Pancreas (tissue), 10 donors: ENCODE measurements at regions of chr6 and their contacts with region 1.

Region 1: DNA sequence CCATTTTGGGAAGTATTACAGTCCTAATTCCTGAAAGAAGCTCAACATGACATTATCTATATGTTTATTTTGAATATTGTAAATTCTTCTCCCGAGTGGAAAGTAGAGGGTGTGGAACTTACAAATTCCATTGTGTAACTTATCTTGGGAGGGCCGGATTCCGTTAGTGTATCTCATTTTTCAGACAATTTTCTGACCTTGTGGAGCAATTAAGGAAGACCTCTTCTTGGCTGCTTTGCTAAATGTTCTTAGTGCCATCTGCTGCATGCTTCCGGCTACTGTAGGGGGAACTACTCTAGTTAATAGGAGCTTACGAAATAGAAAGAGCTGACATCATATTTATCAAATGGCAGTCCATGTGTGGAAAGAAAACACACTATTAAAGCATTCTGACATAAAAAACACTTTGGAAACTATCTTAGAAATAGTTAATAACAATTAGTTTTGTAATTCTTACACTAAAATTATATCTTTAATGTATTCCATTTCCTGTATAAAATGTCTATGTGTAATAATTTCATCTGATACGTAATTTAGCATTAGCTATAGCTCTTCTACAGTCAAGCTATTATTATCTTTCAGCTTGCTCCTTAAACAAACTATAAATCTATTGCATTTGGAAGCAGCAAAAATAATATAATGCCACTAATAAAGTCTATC is 41.5 kb upstream of the KCNQ5 start:
- DNase-seq: peak in 3 of 6 donors; percentile 33 to 50 (median 46)
- ATAC-seq: peak; percentile 72 to 99 (median 90)
- H3K4me3 ChIP-seq: no peak overlapping the region
- H3K27ac ChIP-seq: no peak overlapping the region
- H3K4me1 ChIP-seq: peaks cover 0 to 4% (median 0%) of the 10 kb centered on the region in 3 donors
- H3K27me3 ChIP-seq: no peaks in the 10 kb centered on the region
- CTCF ChIP-seq: peak in 2 of 4 donors; percentile 12 to 25

Region 2: DNA sequence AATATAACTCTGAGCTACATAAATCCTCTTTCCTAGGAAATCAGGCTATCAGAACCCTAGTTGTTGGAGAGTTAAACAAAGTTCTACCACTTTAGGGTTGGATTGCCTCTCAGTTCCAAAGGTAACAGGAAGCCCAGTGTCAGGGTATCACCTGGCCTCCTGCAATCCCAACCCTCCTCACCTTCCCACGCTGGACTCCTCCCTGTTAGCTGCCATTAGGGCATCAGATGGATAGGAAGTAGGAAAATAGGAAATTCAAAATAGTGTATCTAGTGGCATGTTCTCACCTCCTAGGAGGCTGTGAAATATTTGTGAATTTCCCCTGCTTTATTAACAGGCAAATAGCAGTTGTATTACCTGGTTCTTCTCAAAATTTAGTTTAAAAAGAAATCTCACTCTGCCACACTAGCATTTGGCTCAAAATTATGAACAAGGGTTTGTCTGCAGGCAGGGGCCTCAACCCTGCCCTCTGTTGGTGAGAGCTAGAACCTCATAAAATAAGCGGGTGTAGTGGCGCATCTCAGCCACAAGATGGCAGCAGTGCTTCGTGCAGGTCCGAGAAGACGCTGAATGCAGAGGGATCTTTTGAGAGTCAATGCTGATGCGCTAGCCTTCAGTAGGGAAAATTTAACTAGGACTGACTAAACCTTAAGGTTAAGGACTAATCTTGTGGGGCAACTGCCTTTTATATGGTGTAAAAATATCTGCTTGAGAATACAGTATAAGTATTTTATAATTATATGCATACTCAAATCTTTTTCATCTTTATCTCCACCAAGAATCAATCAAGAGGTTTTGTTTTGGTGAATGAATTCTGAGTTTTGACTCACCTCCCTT is 168.3 kb before region 1 on chr6:
- intact Hi-C with region 1: loop called in 1 of 3 experiments (anchors 5 kb)
- DNase-seq: peak; percentile 34 to 86 (median 76)
- ATAC-seq: peak; percentile 69 to 99 (median 95)
- H3K4me3 ChIP-seq: no peak overlapping the region
- H3K27ac ChIP-seq: no peak overlapping the region
- H3K4me1 ChIP-seq: peaks cover 0 to 3% (median 0%) of the 10 kb centered on the region in 3 donors
- H3K27me3 ChIP-seq: no peaks in the 10 kb centered on the region
- CTCF ChIP-seq: peak; percentile 99 to 100 (median 100)

Region 3: GRCh38 chr6:72505446-72505845 is 75.0 kb before region 1 on chr6:
- intact Hi-C with region 1: no loop called
- DNase-seq: no peak
- ATAC-seq: no peak
- H3K4me3 ChIP-seq: no peak overlapping the region
- H3K27ac ChIP-seq: no peak overlapping the region
- H3K4me1 ChIP-seq: no peaks in the 10 kb centered on the region
- H3K27me3 ChIP-seq: no peaks in the 10 kb centered on the region
- CTCF ChIP-seq: no peak